ENCODE measurements at regions of chr5 and their contacts with region 1.

Region 1: GRCh38 chr5:90529194-90529938 is at the start of gene LYSMD3:
- DNase-seq: peak; percentile 98
- H3K4me3 Mint-ChIP-seq: peak within 1 kb of the TSS; percentile 95
- H3K27ac Mint-ChIP-seq: peak within 1 kb of the TSS; percentile 90
- H3K4me1 Mint-ChIP-seq: peaks cover 22% of the 10 kb centered on the region
- H3K27me3 Mint-ChIP-seq: peaks cover 6% of the 10 kb centered on the region
- total RNA-seq, gene LYSMD3: 10.2 to 11.1 TPM

Region 2: GRCh38 chr5:89849830-89850512 is 679.4 kb before region 1 on chr5:
- CTCF ChIA-PET with region 1: no interaction called
- intact Hi-C with region 1: no loop called
- DNase-seq: no peak
- H3K4me3 Mint-ChIP-seq: no peak overlapping the region
- H3K27ac Mint-ChIP-seq: no peak overlapping the region
- H3K4me1 Mint-ChIP-seq: no peaks in the 10 kb centered on the region
- H3K27me3 Mint-ChIP-seq: no peaks in the 10 kb centered on the region

Region 3: DNA sequence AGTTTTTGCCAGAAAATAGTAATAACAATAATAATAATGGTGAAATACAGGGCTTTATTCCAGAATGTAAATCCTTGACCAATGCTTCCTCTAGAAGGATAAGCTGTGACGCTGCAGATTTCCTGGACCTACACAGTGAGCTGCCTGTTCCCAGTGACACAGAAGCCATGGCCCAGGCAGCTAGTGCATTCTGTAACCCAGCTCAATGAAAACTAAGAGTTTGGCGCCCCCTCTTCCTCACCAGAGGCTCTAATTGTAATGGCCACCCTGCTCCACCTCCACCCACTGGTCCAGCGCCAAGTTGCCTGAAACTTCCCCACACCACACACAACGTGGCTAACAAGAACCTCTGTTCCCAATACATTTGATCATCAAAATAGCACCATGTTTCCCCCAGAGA is 368.0 kb before region 1 on chr5:
- CTCF ChIA-PET with region 1: no interaction called
- intact Hi-C with region 1: no loop called
- DNase-seq: no peak
- H3K4me3 Mint-ChIP-seq: no peak overlapping the region
- H3K27ac Mint-ChIP-seq: no peak overlapping the region
- H3K4me1 Mint-ChIP-seq: no peaks in the 10 kb centered on the region
- H3K27me3 Mint-ChIP-seq: no peaks in the 10 kb centered on the region

Region 4: GRCh38 chr5:90264689-90265544 is 264.4 kb before region 1 on chr5:
- CTCF ChIA-PET with region 1: interaction called, 4 read pairs
- intact Hi-C with region 1: loop called (anchors 1 kb)
- DNase-seq: peak; percentile 73
- H3K4me3 Mint-ChIP-seq: no peak overlapping the region
- H3K27ac Mint-ChIP-seq: no peak overlapping the region
- H3K4me1 Mint-ChIP-seq: peaks cover 2% of the 10 kb centered on the region
- H3K27me3 Mint-ChIP-seq: peaks cover 7% of the 10 kb centered on the region

Region 5: DNA sequence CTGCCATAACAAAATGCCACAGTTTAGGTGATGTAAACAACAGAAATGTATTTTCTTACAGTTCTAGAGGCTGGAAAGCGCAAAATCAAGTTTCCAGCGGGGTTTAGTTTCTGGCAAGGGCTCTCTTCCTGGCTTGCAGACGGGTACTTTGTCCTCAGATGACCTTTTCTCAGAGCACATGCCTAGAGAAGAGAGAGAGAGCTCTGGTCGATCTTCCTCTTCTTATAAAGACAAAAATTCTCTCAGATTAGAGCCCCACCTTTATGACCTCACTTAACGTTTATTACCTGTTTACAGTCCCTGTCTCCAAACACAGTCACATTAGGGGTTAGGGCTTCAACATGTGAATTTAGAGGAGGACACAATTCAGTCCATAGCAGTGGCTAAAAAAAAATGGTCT is 239.5 kb before region 1 on chr5:
- CTCF ChIA-PET with region 1: no interaction called
- intact Hi-C with region 1: loop called (anchors 5 kb)
- DNase-seq: no peak
- H3K4me3 Mint-ChIP-seq: no peak overlapping the region
- H3K27ac Mint-ChIP-seq: no peak overlapping the region
- H3K4me1 Mint-ChIP-seq: no peaks in the 10 kb centered on the region
- H3K27me3 Mint-ChIP-seq: peaks cover 9% of the 10 kb centered on the region

Region 6: GRCh38 chr5:90409318-90410177 is 119.8 kb before region 1 on chr5 and contains the start of gene CETN3:
- CTCF ChIA-PET with region 1: interaction called, 5 read pairs
- intact Hi-C with region 1: loop called (anchors 1 kb)
- DNase-seq: peak; percentile 93
- H3K4me3 Mint-ChIP-seq: no peak within 1 kb of the TSS
- H3K27ac Mint-ChIP-seq: no peak within 1 kb of the TSS
- H3K4me1 Mint-ChIP-seq: peaks cover 15% of the 10 kb centered on the region
- H3K27me3 Mint-ChIP-seq: no peaks in the 10 kb centered on the region
- total RNA-seq, gene CETN3: 41.9 to 45.3 TPM

Region 7: DNA sequence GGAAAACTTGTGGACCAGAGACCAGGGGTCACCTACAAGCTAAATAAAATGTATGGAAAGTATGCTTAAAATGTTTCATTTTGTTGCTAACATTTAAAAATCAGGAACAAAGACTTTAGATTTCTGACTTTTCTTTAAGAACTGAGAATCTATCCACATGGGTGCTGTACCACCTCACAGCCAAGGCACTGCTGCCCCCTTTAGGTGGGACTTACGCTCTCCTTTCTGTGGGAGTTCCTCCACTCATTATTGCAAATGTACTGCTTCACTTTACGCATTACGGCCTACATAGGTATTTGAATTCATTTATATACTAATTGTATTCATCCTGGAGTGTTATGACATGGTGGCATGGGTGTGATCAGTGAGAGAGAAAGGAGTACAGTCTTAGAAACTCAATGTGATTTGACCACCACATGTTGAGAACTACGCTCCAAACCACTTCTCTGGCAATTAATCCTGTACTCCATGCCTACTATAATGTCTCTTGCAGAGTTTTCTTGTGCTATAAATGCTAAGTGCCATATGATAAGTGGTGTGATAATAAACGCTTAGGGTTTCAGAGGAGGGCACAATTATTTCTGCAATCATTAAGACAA is 95.2 kb before region 1 on chr5:
- CTCF ChIA-PET with region 1: interaction called, 50 read pairs
- intact Hi-C with region 1: loop called (anchors 1 kb)
- DNase-seq: peak; percentile 65
- H3K4me3 Mint-ChIP-seq: no peak overlapping the region
- H3K27ac Mint-ChIP-seq: no peak overlapping the region
- H3K4me1 Mint-ChIP-seq: no peaks in the 10 kb centered on the region
- H3K27me3 Mint-ChIP-seq: peaks cover 5% of the 10 kb centered on the region

Region 8: DNA sequence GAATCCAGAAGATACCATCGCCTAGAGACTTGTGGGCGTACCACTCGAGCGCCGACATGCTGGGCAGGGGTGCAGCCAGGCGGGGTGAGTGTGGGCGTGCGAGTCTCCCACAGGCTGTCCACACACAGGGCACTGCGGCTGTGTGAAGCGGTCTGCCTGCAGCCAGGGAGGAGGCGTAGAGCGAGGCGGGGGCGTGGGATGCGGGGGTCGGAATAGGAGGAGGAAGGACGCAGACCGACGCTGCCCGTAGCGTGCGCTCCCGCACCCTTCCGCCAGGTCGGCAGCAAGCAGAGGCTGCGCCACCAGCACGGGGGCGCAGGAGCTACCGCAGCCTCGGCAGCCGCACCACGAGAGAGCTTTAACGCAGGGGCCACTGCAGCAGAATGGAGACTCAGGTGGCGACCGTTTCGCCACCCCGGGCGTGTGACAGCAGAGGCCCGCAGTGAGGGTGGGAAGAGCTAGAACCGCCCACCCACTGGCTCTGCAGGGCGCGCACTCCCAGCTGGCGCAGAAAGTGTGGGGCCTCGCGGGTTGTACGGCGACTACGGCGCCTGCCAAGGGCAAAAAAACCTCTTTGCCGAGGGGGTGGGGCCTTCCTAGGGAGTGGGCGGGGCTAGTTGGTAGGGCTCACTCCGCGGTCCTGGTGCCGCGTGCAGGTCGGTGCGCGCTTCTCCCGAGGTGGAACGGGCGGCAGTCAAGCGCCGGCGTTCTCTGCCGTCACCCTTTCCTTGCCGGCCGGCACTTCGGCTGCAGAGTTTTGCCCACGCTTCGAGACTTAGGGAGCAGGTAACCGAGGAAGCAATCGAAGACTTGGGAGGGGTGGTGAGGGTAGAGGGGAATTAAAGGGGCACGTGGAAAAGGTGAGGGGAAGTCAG is 54.9 kb before region 1 on chr5 and contains the starts of genes MBLAC2 and POLR3G:
- CTCF ChIA-PET with region 1: interaction called, 10 read pairs
- intact Hi-C with region 1: loop called (anchors 1 kb)
- DNase-seq: peak; percentile 96
- H3K4me3 Mint-ChIP-seq: peak within 1 kb of the TSS; percentile 92
- H3K27ac Mint-ChIP-seq: peak within 1 kb of the TSS; percentile 85
- H3K4me1 Mint-ChIP-seq: peaks cover 33% of the 10 kb centered on the region
- H3K27me3 Mint-ChIP-seq: no peaks in the 10 kb centered on the region
- total RNA-seq, gene MBLAC2: 2.4 to 2.8 TPM
- total RNA-seq, gene POLR3G: 10.1 to 13.6 TPM

Region 9: DNA sequence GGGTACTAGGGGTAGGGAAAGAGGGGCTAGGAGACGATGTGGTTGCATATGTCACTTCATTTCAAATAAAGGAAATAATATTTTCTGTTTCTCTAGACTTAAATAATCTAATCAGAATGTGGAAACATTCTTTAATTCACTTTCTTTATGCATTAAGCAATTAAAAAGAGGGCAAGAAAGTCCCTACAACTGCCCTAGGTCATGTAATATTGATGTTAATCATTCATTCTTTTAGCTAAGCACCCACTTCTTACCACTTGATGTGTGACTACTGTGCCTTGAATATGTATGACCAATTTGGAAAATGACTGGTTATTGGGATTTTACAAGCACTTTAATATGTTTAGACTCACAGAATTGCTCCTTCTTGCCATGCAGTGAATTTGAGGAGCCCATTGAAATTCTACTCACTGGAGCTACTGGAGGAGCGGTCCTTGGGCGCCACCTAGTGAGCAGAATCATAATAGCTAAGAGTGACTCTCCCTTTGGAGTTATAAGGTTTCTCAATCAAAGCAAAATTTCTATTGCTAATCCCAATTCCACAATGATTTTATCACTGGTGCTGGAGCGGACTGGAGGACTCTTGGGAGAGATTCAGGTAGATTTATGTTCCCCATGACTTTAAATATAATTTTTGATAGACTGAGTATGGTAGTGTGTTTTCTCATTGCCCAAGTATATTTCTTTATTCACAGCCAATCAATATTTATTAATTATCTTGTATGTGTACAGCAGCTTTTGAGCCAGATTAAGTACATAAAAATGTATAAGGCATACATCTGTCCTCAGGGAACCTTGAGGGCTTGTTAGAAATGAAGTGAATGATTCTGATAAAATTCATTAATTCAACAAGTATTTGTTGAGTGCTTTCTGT is 254.3 kb after region 1 on chr5:
- CTCF ChIA-PET with region 1: interaction called, 3 read pairs
- intact Hi-C with region 1: loop called (anchors 1 kb)
- DNase-seq: peak; percentile 81
- H3K4me3 Mint-ChIP-seq: no peak overlapping the region
- H3K27ac Mint-ChIP-seq: no peak overlapping the region
- H3K4me1 Mint-ChIP-seq: no peaks in the 10 kb centered on the region
- H3K27me3 Mint-ChIP-seq: peaks cover 4% of the 10 kb centered on the region